SK-N-SH (cell line): ENCODE measurements at regions of chr14 and their contacts with region 1.

Region 1: DNA sequence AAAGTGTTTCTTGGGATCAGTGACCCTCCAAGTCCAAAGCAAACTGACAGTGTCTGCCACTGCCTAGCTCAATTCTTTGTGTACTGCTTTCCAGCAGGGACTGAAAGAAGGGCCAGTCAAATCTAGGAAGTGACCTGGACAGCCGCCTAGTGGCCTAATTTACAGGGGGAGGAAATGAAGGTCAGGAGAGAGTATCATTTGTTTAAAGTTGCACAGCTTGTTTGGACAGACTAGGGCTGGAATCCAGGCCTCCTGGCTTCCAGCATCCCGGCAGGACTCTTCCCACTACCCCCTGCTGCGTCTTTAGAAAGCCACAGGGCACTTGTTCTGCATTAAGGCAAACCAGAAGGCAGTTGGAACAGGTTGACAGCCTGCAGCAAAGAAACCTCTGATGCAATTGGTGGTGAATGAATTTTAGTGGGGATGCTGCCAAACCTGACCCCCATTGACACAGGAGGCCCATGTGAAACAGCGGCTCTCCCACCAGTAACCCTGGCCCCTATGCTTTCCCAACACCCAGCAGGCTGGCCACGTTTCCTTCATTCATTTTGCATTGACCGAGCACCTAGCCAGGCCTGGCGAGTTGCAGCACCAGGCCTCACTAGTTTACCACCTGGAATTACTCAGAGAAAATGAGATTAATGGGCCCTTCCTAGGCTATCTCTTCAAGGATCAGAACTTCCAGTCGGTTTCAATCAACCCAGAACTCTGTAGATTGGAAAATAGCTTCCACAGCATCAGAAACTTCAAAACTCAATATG is 28.2 kb downstream of the GALNT16 start:
- DNase-seq: peak; percentile 50
- H3K4me3 ChIP-seq: no peak overlapping the region
- H3K27ac ChIP-seq: peak overlapping the region in 1 of 2 experiments; percentile 54; a peak in 2 of 4 replicates
- H3K4me1 ChIP-seq: peaks cover 0 to 27% of the 10 kb centered on the region in 2 experiments; a peak in 2 of 4 replicates
- H3K27me3 ChIP-seq: no peaks in the 10 kb centered on the region
- CTCF ChIP-seq: peak; percentile 56
- EP300 ChIP-seq: peak in 1 of 2 experiments; percentile 32; a peak in 1 of 4 replicates
- RAD21 ChIP-seq: peak; percentile 46

Region 2: GRCh38 chr14:69299286-69300035 is 11.3 kb after region 1 on chr14:
- CTCF ChIA-PET with region 1: interaction called, 13 read pairs
- POLR2A ChIA-PET with region 1: no interaction called
- DNase-seq: no peak
- H3K4me3 ChIP-seq: no peak overlapping the region; a peak in 1 of 4 replicates
- H3K27ac ChIP-seq: no peak overlapping the region
- H3K4me1 ChIP-seq: peaks cover 0 to 3% of the 10 kb centered on the region in 2 experiments; a peak in 1 of 4 replicates
- H3K27me3 ChIP-seq: no peaks in the 10 kb centered on the region
- CTCF ChIP-seq: peak; percentile 41; the same call in 1 of the 2 replicates
- EP300 ChIP-seq: no peak
- RAD21 ChIP-seq: peak; percentile 21; the same call in 1 of the 2 replicates